Activated CD4-positive, alpha-beta T cell treated with anti-CD3 and anti-CD28 coated beads for 36 hours (primary cell): ENCODE measurements at regions of chrX and their contacts with region 1.

Region 1: DNA sequence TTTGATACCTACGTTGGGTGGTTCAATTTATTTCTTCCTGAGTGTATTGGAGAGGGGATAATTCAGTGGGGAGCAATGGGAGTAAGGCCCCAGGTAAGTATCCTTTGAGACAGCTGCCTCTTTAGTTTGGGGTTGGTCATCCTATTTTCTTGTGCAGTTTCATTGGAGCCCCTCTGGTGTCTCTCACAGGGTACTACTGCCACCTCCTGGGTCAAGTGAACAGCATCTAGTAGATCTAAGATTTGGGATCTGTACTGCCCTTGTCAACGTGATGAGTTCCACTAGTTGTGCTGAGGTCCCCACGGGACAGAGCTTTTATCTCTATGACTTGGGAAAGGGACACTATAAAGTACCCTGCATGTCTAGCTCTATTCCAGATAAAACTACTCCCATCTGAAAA is 80.6 kb downstream of the PBDC1 start:
- DNase-seq: peak; percentile 51
- ATAC-seq: peak; percentile 84
- H3K4me3 Mint-ChIP-seq: no peak overlapping the region
- H3K27ac Mint-ChIP-seq: no peak overlapping the region
- H3K4me1 Mint-ChIP-seq: no peaks in the 10 kb centered on the region
- H3K27me3 Mint-ChIP-seq: no peaks in the 10 kb centered on the region

Region 2: DNA sequence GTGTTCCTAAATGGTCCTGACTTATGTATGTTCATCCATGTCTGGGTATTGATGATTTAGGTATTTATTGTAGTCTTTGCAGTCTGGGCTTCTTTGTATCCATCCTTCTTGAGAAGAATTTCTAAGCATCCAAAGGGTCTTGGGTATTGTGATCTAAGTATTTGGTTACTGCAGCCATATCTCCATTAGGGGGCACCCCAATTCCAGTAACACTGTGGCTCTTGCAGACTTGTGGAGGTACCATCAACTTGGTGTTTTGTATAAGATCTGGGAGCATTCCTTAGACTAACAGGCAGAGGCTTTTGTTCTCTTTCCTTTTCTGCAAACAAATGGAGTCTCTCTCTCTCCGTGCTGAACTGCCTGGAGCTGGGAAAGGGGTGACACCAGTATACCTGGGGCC is 1214.5 kb before region 1 on chrX:
- CTCF ChIA-PET with region 1: no interaction called
- POLR2A ChIA-PET with region 1: no interaction called
- intact Hi-C with region 1: loop called in 1 of 2 experiments (anchors 5 kb)
- DNase-seq: peak; percentile 47
- ATAC-seq: peak; percentile 51
- H3K4me3 Mint-ChIP-seq: no peak overlapping the region
- H3K27ac Mint-ChIP-seq: no peak overlapping the region
- H3K4me1 Mint-ChIP-seq: no peaks in the 10 kb centered on the region
- H3K27me3 Mint-ChIP-seq: no peaks in the 10 kb centered on the region

Region 3: DNA sequence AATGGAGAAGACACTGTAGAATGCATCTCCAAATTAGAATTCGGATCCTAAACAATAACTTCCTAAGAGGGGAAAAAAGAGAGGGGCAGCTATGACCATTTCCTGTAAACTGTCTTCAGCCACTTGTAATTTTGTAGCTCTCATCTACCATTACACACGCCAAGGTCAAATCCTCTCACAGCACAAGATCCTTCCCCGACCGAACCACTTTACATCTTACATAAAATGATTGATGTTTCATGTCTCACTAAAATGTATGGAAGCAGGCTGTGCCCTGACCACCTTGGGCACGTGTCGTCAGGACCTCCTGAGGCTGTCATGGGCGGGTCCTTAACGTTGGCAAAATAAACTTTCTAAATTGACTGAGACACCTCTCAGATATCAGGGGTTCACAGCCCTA is 104.7 kb before region 1 on chrX:
- CTCF ChIA-PET with region 1: no interaction called
- POLR2A ChIA-PET with region 1: no interaction called
- intact Hi-C with region 1: loop called (anchors 5 kb)
- DNase-seq: peak; percentile 62
- ATAC-seq: peak; percentile 34
- H3K4me3 Mint-ChIP-seq: peak overlapping the region; percentile 73
- H3K27ac Mint-ChIP-seq: peak overlapping the region; percentile 99
- H3K4me1 Mint-ChIP-seq: peaks cover 13% of the 10 kb centered on the region
- H3K27me3 Mint-ChIP-seq: no peaks in the 10 kb centered on the region

Region 4: GRCh38 chrX:76172325-76172893 is 81.0 kb before region 1 on chrX:
- CTCF ChIA-PET with region 1: no interaction called
- POLR2A ChIA-PET with region 1: no interaction called
- intact Hi-C with region 1: loop called (anchors 1 to 10 kb)
- DNase-seq: no peak
- ATAC-seq: peak; percentile 70
- H3K4me3 Mint-ChIP-seq: peak overlapping the region; percentile 87
- H3K27ac Mint-ChIP-seq: peak overlapping the region; percentile 97
- H3K4me1 Mint-ChIP-seq: peaks cover 49% of the 10 kb centered on the region
- H3K27me3 Mint-ChIP-seq: no peaks in the 10 kb centered on the region

Region 5: DNA sequence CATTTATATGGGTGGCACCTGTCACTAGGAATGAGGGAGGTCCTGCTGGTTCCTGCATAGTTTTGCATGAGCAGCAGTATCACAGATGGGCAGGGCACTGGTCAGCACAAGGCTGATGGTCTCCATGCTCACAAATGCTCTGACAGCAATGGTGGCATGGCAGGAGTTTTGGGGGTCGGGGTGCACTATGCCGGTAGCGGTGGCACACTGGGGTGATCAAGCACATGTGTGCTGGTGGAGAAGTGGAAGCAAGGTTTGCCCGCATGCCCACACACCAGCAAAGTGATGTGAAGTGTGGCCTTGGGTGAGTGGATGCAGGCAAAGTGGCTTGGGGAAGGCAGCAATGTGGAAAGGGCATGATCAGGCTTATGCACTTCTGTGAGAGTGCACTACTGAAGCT is 113.5 kb after region 1 on chrX:
- CTCF ChIA-PET with region 1: no interaction called
- POLR2A ChIA-PET with region 1: no interaction called
- intact Hi-C with region 1: no loop called
- DNase-seq: no peak
- ATAC-seq: no peak
- H3K4me3 Mint-ChIP-seq: no peak overlapping the region
- H3K27ac Mint-ChIP-seq: no peak overlapping the region
- H3K4me1 Mint-ChIP-seq: no peaks in the 10 kb centered on the region
- H3K27me3 Mint-ChIP-seq: no peaks in the 10 kb centered on the region